ENCODE measurements at regions of chr22 and their contacts with region 1.

Region 1: GRCh38 chr22:31489604-31490495 is at the start of gene EIF4ENIF1:
- DNase-seq: peak; percentile 46 to 75 (median 69)
- H3K4me3 ChIP-seq: peak within 1 kb of the TSS; percentile 70 to 88 (median 81)
- H3K4me3 Mint-ChIP-seq: peak within 1 kb of the TSS; percentile 92 to 95
- H3K27ac ChIP-seq: peak within 1 kb of the TSS; percentile 94 to 98
- H3K27ac Mint-ChIP-seq: peak within 1 kb of the TSS; percentile 97 to 99 (median 98)
- H3K4me1 ChIP-seq: peaks cover 24 to 29% of the 10 kb centered on the region in 2 donors
- H3K4me1 Mint-ChIP-seq: peaks cover 28% of the 10 kb centered on the region
- H3K27me3 ChIP-seq: no peaks in the 10 kb centered on the region
- H3K27me3 Mint-ChIP-seq: peaks cover 0 to 3% (median 0%) of the 10 kb centered on the region in 3 donors
- CTCF ChIP-seq: no peak
- polyA plus RNA-seq, gene EIF4ENIF1: 2.5 to 17.0 (median 11.5) TPM

Region 2: GRCh38 chr22:31345331-31346254 is 144.3 kb before region 1 on chr22:
- intact Hi-C with region 1: no loop called
- DNase-seq: peak; percentile 74 to 84 (median 80)
- H3K4me3 ChIP-seq: peak overlapping the region; percentile 62 to 86 (median 80)
- H3K4me3 Mint-ChIP-seq: peak overlapping the region; percentile 81 to 90
- H3K27ac ChIP-seq: peak overlapping the region in 1 of 2 donors; percentile 41
- H3K27ac Mint-ChIP-seq: peak overlapping the region in 6 of 7 donors; percentile 58 to 85 (median 68)
- H3K4me1 ChIP-seq: peaks cover 37 to 47% of the 10 kb centered on the region in 2 donors
- H3K4me1 Mint-ChIP-seq: peaks cover 57% of the 10 kb centered on the region
- H3K27me3 ChIP-seq: no peaks in the 10 kb centered on the region
- H3K27me3 Mint-ChIP-seq: peaks cover 2 to 3% (median 2%) of the 10 kb centered on the region in 3 donors
- CTCF ChIP-seq: peak; percentile 97

Region 3: DNA sequence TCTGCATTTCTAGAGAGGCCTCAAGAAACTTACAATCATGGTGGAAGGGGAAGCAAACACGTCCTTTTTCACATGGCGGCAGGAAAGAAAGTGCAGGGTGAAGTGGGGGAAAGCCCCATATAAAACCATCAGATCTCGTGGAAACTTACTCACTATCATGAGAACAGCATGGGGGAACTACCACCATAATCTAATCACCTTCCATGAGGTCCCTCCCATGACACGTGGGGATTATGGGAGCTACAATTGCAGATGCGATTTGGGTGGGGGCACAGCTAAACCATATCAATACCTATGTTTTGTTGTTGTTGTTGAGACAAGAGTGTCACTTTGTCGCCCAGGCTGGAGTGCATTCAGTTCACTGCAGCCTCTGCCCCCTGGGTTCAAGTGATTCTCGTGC is 36.4 kb after region 1 on chr22:
- intact Hi-C with region 1: loop called in 1 of 2 experiments (anchors 5 kb)
- DNase-seq: peak; percentile 57 to 92 (median 80)
- H3K4me3 ChIP-seq: no peak overlapping the region
- H3K4me3 Mint-ChIP-seq: no peak overlapping the region
- H3K27ac ChIP-seq: peak overlapping the region; percentile 69 to 75
- H3K27ac Mint-ChIP-seq: peak overlapping the region; percentile 84 to 94 (median 88)
- H3K4me1 ChIP-seq: peaks cover 0 to 6% of the 10 kb centered on the region in 2 donors
- H3K4me1 Mint-ChIP-seq: peaks cover 12% of the 10 kb centered on the region
- H3K27me3 ChIP-seq: no peaks in the 10 kb centered on the region
- H3K27me3 Mint-ChIP-seq: peaks cover 0 to 3% (median 0%) of the 10 kb centered on the region in 3 donors
- CTCF ChIP-seq: no peak